Aorta (tissue), 5 donors: ENCODE measurements at regions of chr14 and their contacts with region 1.

Region 1: GRCh38 chr14:77028384-77029231 is at the start of gene IRF2BPL:
- DNase-seq: peak; percentile 99 to 100
- ATAC-seq: peak; percentile 85
- H3K4me3 ChIP-seq: peak within 1 kb of the TSS; percentile 77 to 95
- H3K27ac ChIP-seq: peak within 1 kb of the TSS; percentile 89 to 100
- H3K4me1 ChIP-seq: peaks cover 0 to 5% of the 10 kb centered on the region in 2 donors
- H3K27me3 ChIP-seq: no peaks in the 10 kb centered on the region
- total RNA-seq, gene IRF2BPL: 34.7 to 59.6 TPM

Region 2: GRCh38 chr14:76918751-76919543 is 109.7 kb before region 1 on chr14:
- intact Hi-C with region 1: loop called in 1 of 2 experiments (anchors 1 kb)
- DNase-seq: peak; percentile 98
- ATAC-seq: peak; percentile 96
- H3K4me3 ChIP-seq: no peak overlapping the region
- H3K27ac ChIP-seq: peak overlapping the region; percentile 10 to 97
- H3K4me1 ChIP-seq: peaks cover 1 to 8% of the 10 kb centered on the region in 2 donors
- H3K27me3 ChIP-seq: no peaks in the 10 kb centered on the region

Region 3: DNA sequence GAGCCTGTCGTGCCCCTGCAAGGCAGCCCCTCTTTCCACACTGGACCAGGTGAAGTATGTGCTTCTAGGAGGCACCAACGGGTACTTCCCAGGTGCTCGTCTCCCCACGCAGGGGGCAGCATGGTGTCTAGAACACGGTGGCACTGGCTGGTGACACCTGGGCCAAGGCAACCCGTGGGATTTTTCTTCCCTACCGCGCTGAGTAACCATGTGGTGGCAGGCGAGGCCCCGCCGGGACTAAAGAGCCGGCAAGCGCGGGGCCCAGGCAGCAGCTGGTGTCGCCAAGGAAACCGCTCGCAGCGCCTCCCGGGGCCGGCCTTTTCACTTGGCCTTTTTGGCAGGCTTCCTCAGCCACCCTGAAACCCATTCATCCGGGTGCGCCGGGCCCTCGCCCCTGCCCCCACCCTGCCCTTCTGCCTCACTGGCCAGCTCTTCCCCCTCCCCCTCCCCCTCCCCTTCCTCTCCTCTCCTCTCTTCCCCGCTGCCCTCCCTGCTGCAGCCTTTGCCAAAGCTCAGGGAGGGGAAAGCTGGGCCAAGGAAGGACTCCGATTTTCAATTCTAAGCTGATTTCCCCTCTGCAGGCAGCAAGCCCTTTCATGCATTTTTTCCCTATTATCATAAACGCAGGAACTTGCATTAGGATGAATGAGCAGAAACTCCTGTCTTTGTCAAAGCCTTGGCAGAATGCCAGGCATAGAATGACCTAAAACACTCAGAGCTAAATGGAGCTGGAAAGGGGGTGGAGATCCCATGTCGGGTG is 81.3 kb before region 1 on chr14:
- intact Hi-C with region 1: loop called in 1 of 2 experiments (anchors 2 kb)
- DNase-seq: peak; percentile 95 to 96
- ATAC-seq: peak; percentile 92
- H3K4me3 ChIP-seq: no peak overlapping the region
- H3K27ac ChIP-seq: peak overlapping the region in 1 of 2 donors; percentile 5
- H3K4me1 ChIP-seq: no peaks in the 10 kb centered on the region
- H3K27me3 ChIP-seq: no peaks in the 10 kb centered on the region

Region 4: GRCh38 chr14:77007975-77008421 is 20.6 kb before region 1 on chr14:
- intact Hi-C with region 1: loop called in 1 of 2 experiments (anchors 2 kb)
- DNase-seq: peak; percentile 85 to 86
- ATAC-seq: peak; percentile 85
- H3K4me3 ChIP-seq: no peak overlapping the region
- H3K27ac ChIP-seq: peak overlapping the region; percentile 29 to 68
- H3K4me1 ChIP-seq: no peaks in the 10 kb centered on the region
- H3K27me3 ChIP-seq: no peaks in the 10 kb centered on the region

Region 5: DNA sequence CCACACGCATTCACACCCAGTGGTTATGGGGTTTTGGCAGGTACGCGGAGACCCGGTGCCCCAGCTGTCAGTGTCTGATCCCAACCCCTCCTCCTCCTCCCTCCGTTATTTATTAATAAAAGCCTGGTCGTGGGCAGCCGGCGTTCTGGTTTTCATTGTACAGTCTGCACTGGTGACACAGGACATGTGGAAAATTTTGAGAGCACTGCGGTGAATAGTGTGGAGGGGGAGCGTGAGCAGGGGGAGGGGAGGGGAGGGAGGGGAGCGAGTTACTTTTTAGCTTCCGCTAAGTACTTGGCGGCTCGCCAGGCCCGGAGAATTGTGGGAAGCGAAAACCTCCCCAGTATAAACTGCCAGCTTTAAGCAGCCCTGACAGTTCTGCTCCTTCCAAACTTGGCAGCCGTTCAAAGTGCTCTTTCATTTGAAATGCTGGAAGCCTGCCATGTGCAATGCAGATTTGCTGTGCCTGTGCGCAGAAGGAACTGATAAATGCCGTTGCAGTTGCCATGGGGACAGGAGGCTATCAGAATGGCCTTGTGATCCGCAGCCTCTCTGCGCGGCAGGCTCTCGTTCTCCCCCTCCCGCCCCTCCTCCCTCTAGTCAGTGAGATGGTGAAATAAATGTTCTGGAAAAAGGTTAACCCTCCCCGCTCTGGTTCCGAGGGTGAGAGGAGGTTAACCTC is 11.6 kb after region 1 on chr14:
- intact Hi-C with region 1: loop called in 1 of 2 experiments (anchors 1 kb)
- DNase-seq: peak; percentile 100
- ATAC-seq: peak; percentile 90
- H3K4me3 ChIP-seq: peak overlapping the region in 1 of 2 donors; percentile 32
- H3K27ac ChIP-seq: peak overlapping the region; percentile 38 to 94
- H3K4me1 ChIP-seq: peaks cover 8 to 11% of the 10 kb centered on the region in 2 donors
- H3K27me3 ChIP-seq: no peaks in the 10 kb centered on the region

Region 6: DNA sequence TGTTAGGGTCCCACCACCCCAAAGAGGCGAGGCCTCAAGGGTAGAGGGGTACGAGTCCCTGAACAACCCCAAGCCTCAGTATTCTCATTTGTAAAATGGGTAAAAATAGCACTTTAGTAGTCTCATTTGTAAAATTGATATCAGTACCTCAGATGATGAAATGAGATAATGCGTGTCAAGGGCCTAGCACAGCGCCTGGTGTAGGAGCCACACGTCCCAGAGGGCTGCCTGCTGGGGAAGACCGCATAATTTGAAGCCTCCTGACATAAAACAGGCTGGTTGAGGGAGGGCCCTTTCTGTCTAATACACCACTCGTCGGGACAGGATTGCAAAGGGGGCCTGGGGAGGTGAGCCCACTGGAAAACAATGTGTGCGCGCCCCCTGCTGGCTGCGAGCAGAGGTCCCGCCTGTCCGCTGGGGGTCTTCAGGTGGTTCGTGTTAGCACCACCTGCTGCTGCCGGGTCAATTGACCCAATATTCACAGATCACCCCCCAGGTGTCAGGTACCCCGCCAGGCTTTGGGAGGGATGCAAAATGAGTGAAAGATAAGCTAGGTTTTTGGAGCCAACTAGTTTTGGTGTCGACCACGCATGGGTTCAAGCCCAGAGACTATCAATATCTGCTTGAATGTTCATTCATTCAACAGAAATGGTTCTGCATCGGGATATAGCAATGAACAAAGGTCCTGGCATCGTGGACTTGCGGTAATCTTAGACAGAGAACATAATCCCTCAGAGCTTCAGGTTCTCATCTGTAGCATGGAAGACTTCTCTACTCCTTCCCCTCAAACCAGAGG is 24.6 kb after region 1 on chr14:
- intact Hi-C with region 1: loop called in 1 of 2 experiments (anchors 1 kb)
- DNase-seq: peak; percentile 81 to 92
- ATAC-seq: peak; percentile 78
- H3K4me3 ChIP-seq: no peak overlapping the region
- H3K27ac ChIP-seq: no peak overlapping the region
- H3K4me1 ChIP-seq: no peaks in the 10 kb centered on the region
- H3K27me3 ChIP-seq: no peaks in the 10 kb centered on the region